Activated CD4-positive, alpha-beta T cell treated with anti-CD3 and anti-CD28 coated beads, Interleukin-2, amount 10 ng/mL, durations not matched to agents 24 days and 14 days (primary cell): ENCODE measurements at regions of chrX and their contacts with region 1.

Region 1: DNA sequence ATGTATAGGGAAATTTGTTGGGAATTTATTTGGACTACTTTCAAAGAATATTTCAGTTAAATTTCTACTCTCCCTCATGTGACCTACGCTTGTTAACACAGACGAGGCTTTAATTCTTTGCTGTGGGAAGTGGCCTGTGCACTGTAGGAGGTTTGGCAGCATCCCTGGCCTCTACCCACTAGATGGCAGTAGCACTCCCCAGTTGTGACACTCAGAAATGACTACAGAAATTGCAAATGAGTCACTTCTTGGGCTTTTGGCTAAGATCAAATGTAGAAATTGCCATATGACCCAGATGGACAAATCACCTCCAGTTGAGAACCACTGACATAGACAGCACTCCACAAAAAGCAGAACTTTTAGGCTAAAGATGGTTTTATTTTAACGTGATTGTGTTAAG is 22.1 kb downstream of the PIR start:
- DNase-seq: peak; percentile 83
- H3K4me3 Mint-ChIP-seq: no peak overlapping the region
- H3K27ac Mint-ChIP-seq: no peak overlapping the region
- H3K4me1 Mint-ChIP-seq: peaks cover 2% of the 10 kb centered on the region
- H3K27me3 Mint-ChIP-seq: no peaks in the 10 kb centered on the region

Region 2: DNA sequence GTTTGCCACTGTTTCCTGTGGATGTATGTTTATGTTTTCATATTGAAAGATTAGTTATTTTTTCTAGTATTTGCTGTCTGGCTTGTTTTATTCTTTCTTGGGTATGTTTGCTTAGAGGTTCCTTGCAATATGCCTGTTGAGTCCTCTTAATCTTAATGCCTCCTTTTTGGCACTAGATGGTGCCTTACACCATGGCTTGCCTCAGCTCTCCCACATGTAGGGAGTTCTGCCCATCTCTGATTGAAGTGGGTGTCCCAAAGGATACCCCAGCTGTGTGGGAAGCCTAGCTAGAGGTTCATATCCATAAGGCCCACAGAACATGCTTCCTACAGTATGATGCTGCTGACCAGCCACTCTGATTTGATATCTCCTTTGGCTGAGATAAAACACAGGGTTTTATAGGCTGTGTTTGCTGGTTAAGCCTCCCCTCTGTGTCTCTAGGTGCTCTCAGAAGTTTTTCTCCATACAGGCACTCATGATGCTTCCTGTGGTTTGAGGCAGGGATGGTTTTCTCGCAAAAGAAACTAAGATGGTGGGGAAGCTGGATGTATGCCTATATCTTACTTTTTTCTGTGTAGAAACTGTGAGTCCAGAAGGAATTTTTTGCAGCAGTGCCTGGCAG is 363.5 kb before region 1 on chrX:
- intact Hi-C with region 1: loop called (anchors 5 kb)
- DNase-seq: peak; percentile 55
- H3K4me3 Mint-ChIP-seq: no peak overlapping the region
- H3K27ac Mint-ChIP-seq: no peak overlapping the region
- H3K4me1 Mint-ChIP-seq: peaks cover 5% of the 10 kb centered on the region
- H3K27me3 Mint-ChIP-seq: peaks cover 4% of the 10 kb centered on the region

Region 3: DNA sequence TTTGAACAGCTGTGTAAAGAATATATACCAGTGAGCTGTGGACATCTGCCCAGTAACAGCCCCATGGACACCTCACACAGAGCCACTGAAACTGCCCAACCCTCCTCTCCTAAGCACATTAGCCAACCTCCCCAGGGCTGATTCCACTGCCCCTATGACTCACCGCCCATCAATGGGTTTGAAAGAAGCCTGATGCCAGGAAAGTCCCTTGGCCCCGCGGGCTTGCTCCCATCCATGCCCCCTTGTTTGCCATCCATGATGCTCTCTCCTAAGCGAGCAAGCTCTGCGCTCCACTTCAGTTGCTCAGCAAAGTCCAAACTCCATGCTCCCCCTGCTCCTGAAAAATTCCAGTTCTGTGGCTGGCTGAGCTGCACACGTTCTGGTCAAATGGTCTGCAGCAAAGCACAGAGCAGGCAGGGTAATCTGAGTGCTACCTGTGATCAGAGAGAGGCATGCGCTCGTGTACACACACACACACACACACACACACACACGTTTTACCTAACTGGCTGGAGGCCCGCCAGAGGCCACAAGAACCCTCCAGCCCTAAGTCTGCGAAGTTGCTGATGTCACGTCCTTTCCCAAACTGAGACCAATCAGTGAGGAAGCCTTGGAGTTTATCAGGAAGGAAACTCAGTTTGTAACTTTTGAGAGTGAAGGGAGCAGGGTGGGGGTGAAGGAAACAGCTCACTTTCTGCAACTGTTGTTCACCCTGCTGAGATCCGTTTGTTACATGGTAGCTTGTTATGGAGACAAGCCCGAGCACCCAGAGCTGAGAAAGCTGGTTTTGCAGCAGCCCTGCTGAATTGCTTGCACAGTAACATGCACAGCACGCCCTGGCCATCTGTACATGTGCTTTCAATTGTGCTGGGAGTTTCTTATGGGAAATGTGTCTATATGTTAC is 201.1 kb before region 1 on chrX and contains the start of gene ASB9:
- intact Hi-C with region 1: no loop called
- DNase-seq: peak; percentile 57
- H3K4me3 Mint-ChIP-seq: peak within 1 kb of the TSS; percentile 62
- H3K27ac Mint-ChIP-seq: peak within 1 kb of the TSS; percentile 18
- H3K4me1 Mint-ChIP-seq: peaks cover 5% of the 10 kb centered on the region
- H3K27me3 Mint-ChIP-seq: no peaks in the 10 kb centered on the region
- total RNA-seq, gene ASB9: 0.24 and 0.33 TPM in 2 replicates

Region 4: DNA sequence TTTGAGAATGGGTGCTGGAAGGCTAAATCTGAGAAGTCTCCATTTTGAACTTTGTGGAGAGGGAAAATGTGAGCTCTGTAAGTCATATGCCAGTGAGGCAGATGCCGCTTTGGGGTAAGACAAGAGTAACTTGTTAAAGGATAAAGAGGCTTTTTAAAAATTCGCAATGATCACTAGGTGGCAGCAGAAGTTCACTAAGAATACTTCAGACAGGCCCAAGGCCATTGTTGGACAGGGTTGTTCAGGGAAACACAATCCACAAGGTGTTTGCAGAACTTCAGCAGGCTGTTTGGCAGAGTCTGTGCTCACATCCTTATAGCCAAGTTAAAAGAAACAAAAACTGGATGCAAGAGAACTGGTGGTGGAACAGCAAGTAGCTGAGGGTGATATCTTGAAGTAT is 122.0 kb before region 1 on chrX:
- intact Hi-C with region 1: loop called (anchors 1 kb)
- DNase-seq: peak; percentile 69
- H3K4me3 Mint-ChIP-seq: no peak overlapping the region
- H3K27ac Mint-ChIP-seq: no peak overlapping the region
- H3K4me1 Mint-ChIP-seq: no peaks in the 10 kb centered on the region
- H3K27me3 Mint-ChIP-seq: peaks cover 11% of the 10 kb centered on the region

Region 5: GRCh38 chrX:15493118-15493962 is 22.3 kb after region 1 on chrX and contains the start of gene PIR:
- intact Hi-C with region 1: loop called (anchors 2 kb)
- DNase-seq: peak; percentile 85
- H3K4me3 Mint-ChIP-seq: peak within 1 kb of the TSS; percentile 86
- H3K27ac Mint-ChIP-seq: peak within 1 kb of the TSS; percentile 79
- H3K4me1 Mint-ChIP-seq: peaks cover 10% of the 10 kb centered on the region
- H3K27me3 Mint-ChIP-seq: peaks cover 5% of the 10 kb centered on the region
- total RNA-seq, gene PIR: 3.1 and 4.2 TPM in 2 replicates

Region 6: GRCh38 chrX:15564981-15565579 is 94.1 kb after region 1 on chrX:
- intact Hi-C with region 1: loop called (anchors 1 kb)
- DNase-seq: peak; percentile 68
- H3K4me3 Mint-ChIP-seq: no peak overlapping the region
- H3K27ac Mint-ChIP-seq: no peak overlapping the region
- H3K4me1 Mint-ChIP-seq: no peaks in the 10 kb centered on the region
- H3K27me3 Mint-ChIP-seq: peaks cover 10% of the 10 kb centered on the region